GM12878 (cell line): ENCODE measurements at regions of chrX and their contacts with region 1.

Region 1: GRCh38 chrX:154804957-154805695 is at the start of gene MPP1:
- DNase-seq: peak; percentile 36
- ATAC-seq: peak; percentile 99
- H3K4me3 ChIP-seq: peak within 1 kb of the TSS; percentile 70
- H3K27ac ChIP-seq: no peak within 1 kb of the TSS
- H3K4me1 ChIP-seq: no peaks in the 10 kb centered on the region
- H3K27me3 ChIP-seq: no peaks in the 10 kb centered on the region
- CTCF ChIP-seq: no peak
- EP300 ChIP-seq: no peak
- POLR2A ChIP-seq: peak; percentile 57
- RAD21 ChIP-seq: no peak
- polyA plus RNA-seq, gene MPP1: 11.9 to 17.9 TPM

Region 2: DNA sequence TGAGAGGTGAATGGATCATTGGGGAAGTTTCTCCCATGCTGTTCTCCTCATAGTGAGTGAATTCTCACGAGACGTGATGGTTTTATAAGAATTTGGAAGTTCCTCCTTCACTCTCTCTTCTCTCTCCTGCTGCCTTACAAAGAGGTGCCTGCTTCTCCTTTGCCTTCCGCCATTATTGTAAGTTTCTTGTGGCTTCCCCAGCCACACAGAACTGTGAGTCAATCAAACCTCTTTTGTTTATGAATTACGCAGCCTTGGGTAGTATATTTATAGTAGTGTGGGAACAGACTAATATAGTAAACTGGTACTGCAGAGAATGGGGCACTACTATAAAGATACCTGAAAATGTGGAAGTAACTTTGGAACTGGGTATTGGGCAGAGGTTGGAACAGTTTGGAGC is 144.0 kb before region 1 on chrX:
- CTCF ChIA-PET with region 1: no interaction called
- POLR2A ChIA-PET with region 1: no interaction called
- RAD21 ChIA-PET with region 1: no interaction called
- SMC1A ChIA-PET with region 1: no interaction called
- in situ Hi-C with region 1: no loop called
- intact Hi-C with region 1: no loop called
- DNase-seq: no peak
- ATAC-seq: no peak; the same call in 2 of the 3 replicates
- H3K4me3 ChIP-seq: no peak overlapping the region
- H3K27ac ChIP-seq: no peak overlapping the region
- H3K4me1 ChIP-seq: no peaks in the 10 kb centered on the region
- H3K27me3 ChIP-seq: no peaks in the 10 kb centered on the region
- CTCF ChIP-seq: no peak
- EP300 ChIP-seq: no peak
- POLR2A ChIP-seq: no peak
- RAD21 ChIP-seq: no peak

Region 3: DNA sequence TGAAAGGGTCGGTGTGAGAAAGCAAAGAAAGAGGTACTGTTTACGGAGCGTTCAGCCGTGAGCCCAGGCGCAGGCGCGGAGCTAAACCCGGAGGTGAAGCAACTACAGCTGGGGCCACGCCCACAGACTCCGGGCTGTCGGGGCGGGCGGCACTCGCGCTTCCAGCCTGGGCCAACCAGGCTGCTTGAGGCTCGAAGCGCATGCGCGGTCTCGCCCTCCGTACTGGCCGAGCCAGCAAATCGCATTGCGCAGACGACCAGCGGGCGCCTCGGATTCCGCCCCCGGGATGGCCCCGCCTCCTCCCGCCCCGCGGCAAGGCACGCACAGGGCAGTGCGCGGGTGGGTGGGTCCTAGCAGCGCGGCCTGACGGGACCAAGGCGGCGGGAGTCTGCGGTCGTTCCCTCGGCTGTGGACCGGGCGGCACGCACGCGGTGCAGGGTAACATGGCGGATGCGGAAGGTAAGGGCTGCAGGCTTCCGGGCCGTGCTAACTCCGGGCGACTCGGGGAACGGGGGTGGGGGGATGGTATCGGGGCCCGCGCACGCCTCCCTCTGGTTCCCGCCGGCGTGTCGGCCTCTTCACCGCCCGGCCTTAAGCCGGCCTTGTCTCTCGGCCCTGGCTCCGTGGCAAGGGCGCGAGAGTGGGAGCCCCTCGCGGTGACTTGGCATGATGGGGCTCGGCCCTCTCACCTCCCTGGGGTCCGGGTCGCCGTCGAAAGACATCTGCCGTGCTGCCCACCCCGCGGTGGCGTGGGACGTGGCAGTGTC is 42.4 kb before region 1 on chrX and contains the start of gene DKC1:
- CTCF ChIA-PET with region 1: no interaction called
- POLR2A ChIA-PET with region 1: interaction called, 3 read pairs
- RAD21 ChIA-PET with region 1: interaction called, 4 read pairs
- SMC1A ChIA-PET with region 1: no interaction called
- in situ Hi-C with region 1: no loop called
- intact Hi-C with region 1: loop called (anchors 2 kb)
- DNase-seq: peak; percentile 82
- ATAC-seq: peak; percentile 91
- H3K4me3 ChIP-seq: peak within 1 kb of the TSS; percentile 73
- H3K27ac ChIP-seq: peak within 1 kb of the TSS; percentile 76
- H3K4me1 ChIP-seq: no peaks in the 10 kb centered on the region
- H3K27me3 ChIP-seq: no peaks in the 10 kb centered on the region
- CTCF ChIP-seq: peak in 2 of 3 experiments; percentile 5 to 7; a peak in 1 of 6 replicates
- EP300 ChIP-seq: no peak
- POLR2A ChIP-seq: peak; percentile 90
- RAD21 ChIP-seq: no peak
- polyA plus RNA-seq, gene DKC1: 106 to 159 TPM

Region 4: GRCh38 chrX:154819771-154820341 is 14.7 kb after region 1 on chrX:
- CTCF ChIA-PET with region 1: interaction called, 4 read pairs
- POLR2A ChIA-PET with region 1: interaction called, 14 read pairs
- RAD21 ChIA-PET with region 1: interaction called, 8 read pairs
- SMC1A ChIA-PET with region 1: interaction called, 19 read pairs
- in situ Hi-C with region 1: no loop called
- intact Hi-C with region 1: no loop called
- DNase-seq: no peak
- ATAC-seq: peak; percentile 94
- H3K4me3 ChIP-seq: no peak overlapping the region
- H3K27ac ChIP-seq: peak overlapping the region; percentile 20; the same call in 1 of the 2 replicates
- H3K4me1 ChIP-seq: no peaks in the 10 kb centered on the region; the same call in 1 of the 2 replicates
- H3K27me3 ChIP-seq: no peaks in the 10 kb centered on the region
- CTCF ChIP-seq: no peak
- EP300 ChIP-seq: no peak
- POLR2A ChIP-seq: no peak
- RAD21 ChIP-seq: no peak

Region 5: DNA sequence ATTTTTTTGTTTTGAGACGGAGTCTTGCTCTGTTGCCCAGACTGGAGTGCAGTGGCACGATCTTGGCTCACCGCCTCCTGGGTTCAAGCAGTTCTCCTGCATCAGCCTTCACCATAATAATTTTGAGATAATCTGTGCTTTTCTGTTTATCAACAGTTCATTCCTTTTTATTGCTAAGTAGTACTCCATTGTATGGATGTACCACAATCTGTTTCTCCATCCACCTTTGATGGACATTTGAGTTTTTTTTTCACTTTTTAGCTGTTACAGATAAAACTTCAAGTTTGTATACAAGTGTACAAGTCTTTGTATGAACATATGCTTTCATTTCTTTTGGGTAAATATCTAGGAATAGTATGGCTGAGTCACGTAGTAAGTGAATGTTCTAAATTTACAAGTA is 230.6 kb after region 1 on chrX:
- CTCF ChIA-PET with region 1: no interaction called
- POLR2A ChIA-PET with region 1: no interaction called
- RAD21 ChIA-PET with region 1: no interaction called
- SMC1A ChIA-PET with region 1: no interaction called
- in situ Hi-C with region 1: no loop called
- intact Hi-C with region 1: no loop called
- DNase-seq: no peak
- ATAC-seq: no peak
- H3K4me3 ChIP-seq: no peak overlapping the region
- H3K27ac ChIP-seq: no peak overlapping the region
- H3K4me1 ChIP-seq: no peaks in the 10 kb centered on the region
- H3K27me3 ChIP-seq: no peaks in the 10 kb centered on the region
- CTCF ChIP-seq: no peak
- EP300 ChIP-seq: no peak
- POLR2A ChIP-seq: no peak
- RAD21 ChIP-seq: no peak